ENCODE measurements at regions of chrX and their contacts with region 1.

Region 1: DNA sequence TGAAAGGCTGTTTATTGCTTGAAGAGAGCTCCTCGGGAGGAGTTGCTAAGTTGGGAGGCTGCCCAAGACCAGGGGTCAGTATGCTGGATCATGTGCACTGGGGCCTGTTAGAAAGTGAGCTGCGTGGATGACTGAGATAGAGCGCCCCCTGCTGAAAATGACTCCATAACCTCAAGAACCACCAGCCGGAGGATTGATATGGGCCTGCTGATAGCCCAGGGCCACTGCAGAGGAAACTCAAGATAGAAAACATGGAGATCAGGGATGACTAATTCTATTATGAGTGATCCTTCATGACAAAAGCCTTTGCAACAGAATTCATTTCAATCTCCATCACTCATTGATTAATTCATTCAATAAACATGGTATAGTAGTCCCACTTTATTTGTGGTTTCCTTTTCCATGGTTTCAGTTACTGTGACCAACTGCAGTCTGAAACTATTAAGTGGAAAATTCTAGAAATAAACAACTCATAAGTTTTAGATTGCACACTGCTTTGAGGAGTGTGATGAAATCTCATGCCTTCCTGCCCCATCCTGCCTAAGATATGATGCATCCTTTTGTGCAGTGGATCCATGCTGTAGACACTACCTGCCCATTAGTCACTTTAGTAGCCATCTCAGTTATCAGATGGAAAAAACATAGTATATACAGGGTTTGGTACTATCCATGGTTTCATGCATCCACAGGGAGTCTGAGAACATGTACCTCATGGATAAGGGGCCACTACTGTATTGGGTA is 126.7 kb upstream of the MBNL3 start:
- DNase-seq: peak in 4 of 5 donors; percentile 47 to 77 (median 57)
- H3K4me3 ChIP-seq: no peak overlapping the region
- H3K27ac ChIP-seq: no peak overlapping the region
- H3K4me1 ChIP-seq: no peaks in the 10 kb centered on the region
- H3K27me3 ChIP-seq: peaks cover 5% of the 10 kb centered on the region
- CTCF ChIP-seq: peak; percentile 36

Region 2: GRCh38 chrX:132292793-132293192 is 322.8 kb before region 1 on chrX:
- intact Hi-C with region 1: loop called (anchors 10 kb)
- DNase-seq: peak in 3 of 5 donors; percentile 39 to 82 (median 66)
- H3K4me3 ChIP-seq: no peak overlapping the region
- H3K27ac ChIP-seq: no peak overlapping the region
- H3K4me1 ChIP-seq: no peaks in the 10 kb centered on the region
- H3K27me3 ChIP-seq: no peaks in the 10 kb centered on the region
- CTCF ChIP-seq: peak; percentile 61

Region 3: DNA sequence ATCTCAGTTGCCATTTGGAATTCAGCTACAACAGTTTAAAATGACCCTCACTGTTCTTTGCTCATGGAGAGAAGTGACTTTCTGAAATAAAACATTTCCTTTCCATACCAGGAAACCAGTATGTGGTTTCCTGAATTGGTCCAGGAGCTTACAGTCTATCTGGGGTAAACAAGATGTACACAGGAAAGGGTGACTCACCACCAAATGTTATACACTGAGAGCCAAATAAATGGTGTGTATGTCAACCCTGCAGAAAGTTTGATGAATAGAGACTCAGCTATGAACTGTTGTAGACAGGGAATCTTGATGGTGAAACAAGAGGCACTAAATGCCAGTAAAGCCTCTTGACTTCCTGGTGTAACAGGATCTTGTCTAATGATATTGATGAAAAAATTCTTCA is 242.5 kb after region 1 on chrX:
- intact Hi-C with region 1: no loop called
- DNase-seq: no peak
- H3K4me3 ChIP-seq: no peak overlapping the region
- H3K27ac ChIP-seq: no peak overlapping the region
- H3K4me1 ChIP-seq: no peaks in the 10 kb centered on the region
- H3K27me3 ChIP-seq: peaks cover 4% of the 10 kb centered on the region
- CTCF ChIP-seq: no peak

Measured in kidney (tissue), 22 donors.